ENCODE measurements at regions of chr5 and their contacts with region 1.

Region 1: DNA sequence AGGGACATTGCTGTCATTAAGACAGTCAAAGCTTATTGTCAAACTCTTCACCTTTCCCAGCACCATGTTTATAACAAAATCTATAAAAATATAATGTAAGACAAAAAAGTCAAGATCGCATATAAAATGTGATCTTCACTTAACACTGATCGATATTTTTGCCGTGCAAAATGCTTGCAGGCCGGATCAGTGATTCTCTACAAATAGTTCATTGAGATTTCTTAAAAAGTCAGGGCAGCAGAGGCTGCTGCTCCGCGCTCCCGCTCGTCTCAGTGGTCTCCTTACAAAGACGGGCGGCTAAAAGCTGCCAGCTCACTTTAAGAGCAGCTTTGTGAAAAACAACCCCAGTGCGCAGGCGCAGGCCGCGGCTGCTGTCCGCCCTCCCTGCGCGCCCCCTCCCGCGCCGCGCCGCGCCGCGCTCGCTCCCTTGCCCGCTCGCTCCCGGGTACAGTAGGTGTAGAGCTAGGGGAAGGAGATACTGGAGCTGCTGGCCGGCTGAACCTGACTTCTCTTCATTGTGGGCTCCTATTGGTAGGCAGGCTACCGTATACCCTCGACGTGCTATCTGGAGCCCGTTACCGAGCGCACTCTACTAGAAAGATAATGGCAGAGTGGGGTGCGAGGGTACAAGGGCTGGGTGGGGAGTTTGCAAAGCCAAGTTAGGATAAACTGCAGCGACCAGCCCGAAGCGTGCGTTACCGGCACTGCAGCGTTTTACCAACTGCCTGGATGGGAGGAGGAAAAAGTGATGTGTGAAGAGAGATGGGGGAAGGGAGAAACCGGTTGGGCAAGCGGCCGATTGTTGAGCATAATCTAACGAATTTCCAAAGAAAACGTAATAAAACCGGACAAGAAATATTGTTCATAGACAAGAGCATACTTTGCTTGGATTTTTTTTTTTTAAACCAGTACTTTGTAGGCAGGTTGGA is at the start of gene ARRDC3:
- DNase-seq: peak; percentile 96
- H3K4me3 ChIP-seq: peak within 1 kb of the TSS; percentile 56 to 60
- H3K27ac ChIP-seq: peak within 1 kb of the TSS; percentile 95 to 100
- H3K4me1 ChIP-seq: peaks cover 0 to 2% of the 10 kb centered on the region in 2 donors
- H3K27me3 ChIP-seq: no peaks in the 10 kb centered on the region
- CTCF ChIP-seq: peak in 1 of 4 experiments; percentile 11
- POLR2A ChIP-seq: peak; percentile 92 to 96
- total RNA-seq, gene ARRDC3: 11.5 to 237 (median 38.6) TPM

Region 2: GRCh38 chr5:91101600-91102379 is 281.5 kb before region 1 on chr5:
- intact Hi-C with region 1: loop called (anchors 10 kb)
- DNase-seq: peak; percentile 64 to 83
- H3K4me3 ChIP-seq: no peak overlapping the region
- H3K27ac ChIP-seq: peak overlapping the region in 1 of 2 donors; percentile 4
- H3K4me1 ChIP-seq: no peaks in the 10 kb centered on the region
- H3K27me3 ChIP-seq: no peaks in the 10 kb centered on the region
- CTCF ChIP-seq: peak; percentile 77 to 93 (median 82)
- POLR2A ChIP-seq: no peak

Region 3: DNA sequence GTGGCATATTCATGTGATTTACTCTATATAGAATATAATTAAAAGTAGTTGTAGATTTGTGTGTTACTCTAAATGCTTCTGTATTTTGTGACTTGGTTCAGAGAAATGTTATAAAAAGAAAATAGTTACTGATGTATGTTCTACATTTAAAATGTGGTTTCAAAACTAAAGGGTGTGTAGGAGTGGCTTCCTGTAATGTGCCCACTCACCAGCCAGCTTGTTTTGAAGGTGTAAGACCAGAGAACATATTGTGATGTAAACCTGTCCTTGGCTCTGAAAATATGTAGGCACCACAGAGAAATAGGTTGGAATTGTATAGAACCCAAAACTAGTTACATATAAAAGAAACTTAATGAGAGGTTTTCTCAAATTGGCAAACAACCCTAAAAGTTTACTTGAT is 51.1 kb after region 1 on chr5:
- intact Hi-C with region 1: no loop called
- DNase-seq: no peak
- H3K4me3 ChIP-seq: no peak overlapping the region
- H3K27ac ChIP-seq: no peak overlapping the region
- H3K4me1 ChIP-seq: no peaks in the 10 kb centered on the region
- H3K27me3 ChIP-seq: no peaks in the 10 kb centered on the region
- CTCF ChIP-seq: no peak
- POLR2A ChIP-seq: no peak